ENCODE measurements at regions of chr6 and their contacts with region 1.

Region 1: GRCh38 chr6:34248727-34249551 is at the start of gene SMIM29:
- DNase-seq: peak; percentile 96
- ATAC-seq: peak; percentile 45
- H3K4me3 ChIP-seq: peak within 1 kb of the TSS; percentile 79
- H3K27ac ChIP-seq: peak within 1 kb of the TSS; percentile 60
- H3K4me1 ChIP-seq: peaks cover 54% of the 10 kb centered on the region
- H3K27me3 ChIP-seq: no peaks in the 10 kb centered on the region
- CTCF ChIP-seq: peak; percentile 77
- total RNA-seq, gene SMIM29: 25.8 and 26.8 TPM in 2 replicates

Region 2: DNA sequence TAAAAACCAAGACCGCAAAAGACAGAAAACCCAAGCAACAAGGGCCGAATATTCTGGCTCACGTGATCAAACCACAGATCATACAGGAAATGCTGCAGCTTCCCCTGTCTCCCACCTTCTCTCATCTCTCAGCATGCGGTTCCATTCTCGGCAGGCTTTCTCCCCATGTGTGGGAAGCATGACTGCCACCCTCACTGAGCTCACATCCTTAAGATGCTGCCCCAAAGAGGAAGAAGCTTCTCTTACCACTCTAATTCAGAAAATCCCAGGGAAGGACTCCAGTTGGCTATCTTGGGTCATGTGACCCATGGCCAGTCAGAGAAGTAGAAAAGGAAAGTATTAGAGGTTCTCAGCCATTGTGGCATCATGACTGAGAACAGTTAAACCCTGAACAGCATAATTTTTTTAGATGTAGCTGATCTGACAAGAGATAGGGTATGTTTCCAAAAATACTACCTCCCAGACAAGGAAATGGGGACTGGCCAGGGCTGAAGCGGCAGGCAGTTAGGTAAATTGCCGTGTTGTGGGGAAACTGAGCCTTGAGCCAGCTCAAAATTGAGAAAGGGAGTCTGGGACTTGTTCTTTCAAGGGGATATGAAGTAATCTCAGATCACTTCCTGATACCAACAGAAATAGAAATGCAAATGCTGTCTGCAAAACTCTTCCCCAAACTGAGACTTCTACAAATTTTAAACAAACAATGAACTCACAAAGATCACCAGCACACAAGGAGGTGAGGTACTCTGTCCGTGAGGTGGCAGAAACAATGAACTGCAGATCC is 66.0 kb before region 1 on chr6:
- CTCF ChIA-PET with region 1: no interaction called
- POLR2A ChIA-PET with region 1: no interaction called
- intact Hi-C with region 1: no loop called
- DNase-seq: no peak
- ATAC-seq: no peak
- H3K4me3 ChIP-seq: no peak overlapping the region
- H3K27ac ChIP-seq: no peak overlapping the region
- H3K4me1 ChIP-seq: peaks cover 8% of the 10 kb centered on the region; the same call in 1 of the 2 replicates
- H3K27me3 ChIP-seq: no peaks in the 10 kb centered on the region
- CTCF ChIP-seq: no peak

Region 3: DNA sequence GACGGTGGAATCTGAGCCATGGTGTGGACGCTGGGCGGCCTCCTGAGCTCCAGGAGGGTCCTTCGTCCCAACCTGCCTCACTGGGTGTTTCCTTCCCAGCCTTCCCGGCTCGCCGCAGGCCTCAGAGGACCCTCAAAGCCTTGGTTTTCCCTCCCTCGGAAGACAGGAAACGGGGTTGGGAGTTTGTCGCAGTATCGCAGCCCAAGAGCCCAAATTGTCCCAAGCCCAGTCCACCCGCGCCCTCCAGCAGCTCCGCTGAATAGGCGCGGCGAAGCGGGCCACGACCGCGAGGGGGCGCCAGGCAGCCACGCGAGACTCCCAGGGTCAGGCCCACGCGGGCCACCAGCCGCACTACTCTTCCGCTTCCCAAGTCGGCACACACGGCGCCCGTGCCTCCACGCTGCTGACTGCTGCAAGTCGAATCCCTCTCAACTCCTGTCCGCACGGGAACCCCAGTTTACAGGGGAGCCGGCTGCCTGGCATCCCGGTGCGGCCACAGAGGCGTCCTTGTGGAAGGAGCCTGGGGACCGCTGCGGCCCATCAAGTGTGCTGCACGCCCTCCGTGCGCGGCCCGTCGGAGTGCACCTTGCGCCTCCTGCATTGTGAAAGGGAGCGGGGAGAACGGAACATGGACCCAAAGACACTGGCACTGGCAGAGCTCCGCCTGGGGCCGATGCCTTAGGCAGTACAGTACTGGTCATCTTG is 52.7 kb before region 1 on chr6:
- CTCF ChIA-PET with region 1: interaction called, 6 read pairs
- POLR2A ChIA-PET with region 1: no interaction called
- intact Hi-C with region 1: loop called (anchors 1 kb)
- DNase-seq: peak; percentile 80
- ATAC-seq: peak; percentile 95
- H3K4me3 ChIP-seq: peak overlapping the region; percentile 71
- H3K27ac ChIP-seq: no peak overlapping the region
- H3K4me1 ChIP-seq: peaks cover 9% of the 10 kb centered on the region
- H3K27me3 ChIP-seq: no peaks in the 10 kb centered on the region
- CTCF ChIP-seq: peak; percentile 97

Region 4: DNA sequence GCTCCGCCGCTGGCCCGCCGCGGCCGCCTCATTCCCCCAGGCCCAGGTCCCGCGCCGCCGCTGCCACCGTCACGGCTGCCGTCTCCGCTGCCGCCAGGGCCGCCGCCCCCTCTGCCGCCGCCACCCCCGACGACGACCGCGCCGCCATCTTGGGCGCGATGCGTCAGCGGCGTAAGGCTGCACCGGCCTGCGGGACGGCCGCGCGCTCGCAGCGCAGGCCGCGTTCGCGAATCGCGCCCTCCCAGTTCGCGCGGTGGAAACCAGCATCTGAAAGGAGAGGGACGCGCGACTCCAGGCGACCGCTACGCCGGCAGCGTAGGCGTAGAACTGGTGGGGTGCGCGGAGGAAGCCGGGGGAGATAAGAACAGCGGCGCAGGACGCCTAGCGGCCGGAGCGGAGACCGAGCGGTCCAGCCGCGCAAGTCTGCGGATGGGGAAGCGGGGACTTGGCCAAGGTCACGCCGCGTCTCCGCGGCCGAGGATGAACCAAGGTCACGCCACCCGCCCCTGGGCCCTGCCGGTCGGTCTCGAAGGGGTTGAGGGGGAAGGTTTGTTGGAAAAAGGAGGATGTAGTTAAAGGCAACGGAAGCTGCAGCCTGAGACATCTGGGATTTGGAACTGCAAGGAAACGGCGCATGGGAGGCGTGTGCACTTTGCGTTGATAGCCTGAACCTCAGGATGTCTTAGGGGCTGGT is 143.7 kb after region 1 on chr6 and contains the start of gene NUDT3:
- CTCF ChIA-PET with region 1: no interaction called
- POLR2A ChIA-PET with region 1: no interaction called
- intact Hi-C with region 1: loop called (anchors 1 kb)
- DNase-seq: peak; percentile 91
- ATAC-seq: peak; percentile 83
- H3K4me3 ChIP-seq: peak within 1 kb of the TSS; percentile 96
- H3K27ac ChIP-seq: peak within 1 kb of the TSS; percentile 72
- H3K4me1 ChIP-seq: peaks cover 8% of the 10 kb centered on the region
- H3K27me3 ChIP-seq: no peaks in the 10 kb centered on the region
- CTCF ChIP-seq: peak; percentile 74
- total RNA-seq, gene NUDT3: 24.6 and 28.7 TPM in 2 replicates

Region 5: DNA sequence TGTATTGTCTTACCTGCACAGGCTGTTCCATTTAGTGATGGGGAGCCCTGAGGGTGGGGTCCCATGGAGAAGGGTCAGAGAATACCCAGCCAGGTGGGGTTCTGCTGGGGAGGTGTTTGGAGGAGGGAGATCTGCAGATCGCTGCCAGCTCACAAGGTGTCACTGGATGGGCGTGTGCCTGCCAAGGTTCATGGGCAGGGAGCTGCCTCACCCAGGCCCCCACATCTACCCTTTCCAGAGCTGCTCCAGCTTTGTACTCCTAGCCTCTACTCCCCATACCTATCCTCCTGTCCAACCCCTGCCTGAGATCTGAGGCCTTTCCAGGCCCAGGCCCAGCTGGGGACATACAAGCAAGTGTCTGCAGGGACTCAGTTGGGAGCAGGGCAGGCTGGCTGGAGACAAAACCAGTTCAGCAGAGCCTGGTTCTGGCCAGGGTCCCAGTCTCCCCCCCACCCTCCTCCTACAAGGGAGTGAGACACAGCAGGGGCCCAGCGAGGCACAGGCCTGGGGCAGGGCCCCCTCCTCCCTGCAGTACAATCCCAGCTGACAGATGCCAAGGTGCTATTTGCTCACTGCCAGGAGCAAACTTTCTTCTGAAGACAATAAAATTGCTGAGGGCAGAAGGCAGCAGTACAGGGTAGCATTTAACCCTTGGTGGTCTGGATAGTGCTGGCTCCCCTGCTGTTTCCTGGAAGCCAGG is 287.5 kb after region 1 on chr6:
- CTCF ChIA-PET with region 1: no interaction called
- POLR2A ChIA-PET with region 1: no interaction called
- intact Hi-C with region 1: loop called (anchors 5 kb)
- DNase-seq: peak; percentile 74
- ATAC-seq: peak; percentile 75
- H3K4me3 ChIP-seq: peak overlapping the region; percentile 32; the same call in 1 of the 2 replicates
- H3K27ac ChIP-seq: peak overlapping the region; percentile 78
- H3K4me1 ChIP-seq: peaks cover 17% of the 10 kb centered on the region
- H3K27me3 ChIP-seq: no peaks in the 10 kb centered on the region
- CTCF ChIP-seq: no peak

Region 6: DNA sequence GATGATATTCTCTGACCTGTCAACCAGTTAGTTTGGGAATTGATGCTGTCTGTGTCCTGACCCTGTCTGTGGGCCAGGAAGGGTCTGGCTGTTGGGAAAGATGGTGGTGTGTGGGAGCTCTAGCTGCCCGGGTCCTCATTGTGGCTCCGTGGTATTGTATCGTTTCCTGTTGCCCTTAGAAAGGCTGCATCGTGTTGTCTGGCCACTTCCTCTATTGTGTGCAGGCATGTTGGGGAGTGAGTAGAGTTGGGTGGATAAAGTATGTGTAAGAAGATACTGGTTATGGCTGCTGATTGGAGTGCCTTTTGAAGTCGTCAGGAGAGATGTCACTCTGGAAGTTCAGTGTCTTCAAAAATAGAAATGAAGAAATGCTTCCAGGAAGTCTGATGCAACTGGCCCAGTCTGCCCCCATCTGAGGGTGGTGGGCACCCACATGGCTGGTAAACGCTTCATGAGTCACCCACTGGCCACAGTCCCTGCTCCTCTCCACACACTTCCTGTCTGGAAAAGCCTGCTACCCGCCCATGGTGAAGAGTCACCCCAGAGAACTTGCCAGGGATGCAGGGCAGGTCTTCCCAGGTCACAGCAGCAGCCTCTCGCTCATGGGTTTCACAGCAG is 1121.3 kb after region 1 on chr6:
- CTCF ChIA-PET with region 1: no interaction called
- POLR2A ChIA-PET with region 1: interaction called, 19 read pairs
- intact Hi-C with region 1: no loop called
- DNase-seq: peak; percentile 94
- ATAC-seq: peak; percentile 89
- H3K4me3 ChIP-seq: no peak overlapping the region
- H3K27ac ChIP-seq: peak overlapping the region; percentile 92
- H3K4me1 ChIP-seq: peaks cover 42% of the 10 kb centered on the region
- H3K27me3 ChIP-seq: no peaks in the 10 kb centered on the region
- CTCF ChIP-seq: no peak